Right cardiac atrium (tissue), 5 donors: ENCODE measurements at regions of chr2 and their contacts with region 1.

Region 1: DNA sequence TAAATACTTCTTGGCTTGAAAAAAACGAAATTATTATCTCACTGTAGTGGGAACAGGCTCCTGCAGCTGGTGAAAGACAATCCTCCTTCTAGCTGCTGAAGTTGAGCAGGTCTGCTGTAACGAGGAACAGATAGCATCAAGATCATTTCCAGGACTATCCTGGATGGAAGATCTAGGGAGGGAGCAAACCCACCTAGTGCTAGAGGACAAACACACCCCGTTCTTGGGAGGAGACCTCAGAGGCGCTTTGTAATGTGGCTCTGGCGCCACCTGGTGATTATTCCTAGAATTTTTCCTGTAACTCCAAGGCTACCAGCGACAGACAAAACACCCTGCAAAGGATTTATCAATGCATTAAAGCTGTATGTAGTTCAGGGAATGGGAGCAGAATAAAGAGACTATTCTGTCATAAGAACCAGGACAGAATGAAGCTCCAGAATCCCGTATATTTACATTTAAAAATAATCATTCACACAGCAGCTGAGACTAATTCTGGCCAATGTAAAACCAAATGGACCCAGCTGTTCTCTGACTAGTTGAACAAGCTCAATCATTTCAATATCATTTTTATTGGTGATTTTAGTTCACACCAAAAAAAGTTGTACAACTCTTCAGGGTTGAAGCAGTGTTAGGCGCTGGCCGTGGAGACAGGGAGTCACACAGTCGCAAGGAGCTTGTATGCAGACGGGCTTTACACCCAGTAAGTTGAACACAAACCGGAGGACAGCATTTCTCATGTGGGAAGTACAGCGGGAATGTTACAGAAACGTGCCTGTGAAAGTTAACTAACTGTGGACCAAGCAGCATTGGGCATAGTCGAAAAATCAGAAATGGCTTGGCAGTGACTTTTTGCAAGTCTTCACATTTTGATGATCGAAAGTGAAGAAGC is 290.3 kb downstream of the TRIB2 start:
- DNase-seq: peak; percentile 44 to 61 (median 61)
- ATAC-seq: peak; percentile 90 to 93
- H3K4me3 ChIP-seq: peak overlapping the region; percentile 25
- H3K27ac ChIP-seq: peak overlapping the region; percentile 58
- H3K4me1 ChIP-seq: peaks cover 2% of the 10 kb centered on the region
- H3K27me3 ChIP-seq: no peaks in the 10 kb centered on the region

Region 2: GRCh38 chr2:11829947-11830707 is 1176.9 kb before region 1 on chr2:
- intact Hi-C with region 1: loop called in 2 of 4 experiments (anchors 5 to 10 kb)
- DNase-seq: peak; percentile 62 to 83 (median 71)
- ATAC-seq: peak; percentile 88 to 92
- H3K4me3 ChIP-seq: peak overlapping the region; percentile 34
- H3K27ac ChIP-seq: peak overlapping the region; percentile 55
- H3K4me1 ChIP-seq: peaks cover 8% of the 10 kb centered on the region
- H3K27me3 ChIP-seq: no peaks in the 10 kb centered on the region

Region 3: GRCh38 chr2:11863513-11864328 is 1143.4 kb before region 1 on chr2:
- intact Hi-C with region 1: loop called in 2 of 4 experiments (anchors 10 kb)
- DNase-seq: peak; percentile 91 to 95 (median 92)
- ATAC-seq: peak; percentile 94 to 98
- H3K4me3 ChIP-seq: no peak overlapping the region
- H3K27ac ChIP-seq: no peak overlapping the region
- H3K4me1 ChIP-seq: peaks cover 3% of the 10 kb centered on the region
- H3K27me3 ChIP-seq: no peaks in the 10 kb centered on the region

Region 4: GRCh38 chr2:12728221-12728777 is 278.8 kb before region 1 on chr2:
- intact Hi-C with region 1: loop called in 1 of 4 experiments (anchors 10 kb)
- DNase-seq: no peak
- ATAC-seq: no peak
- H3K4me3 ChIP-seq: no peak overlapping the region
- H3K27ac ChIP-seq: no peak overlapping the region
- H3K4me1 ChIP-seq: peaks cover 42% of the 10 kb centered on the region
- H3K27me3 ChIP-seq: no peaks in the 10 kb centered on the region

Region 5: GRCh38 chr2:12931186-12931844 is 75.8 kb before region 1 on chr2:
- intact Hi-C with region 1: loop called in 1 of 4 experiments (anchors 10 kb)
- DNase-seq: no peak
- ATAC-seq: peak; percentile 86 to 89
- H3K4me3 ChIP-seq: no peak overlapping the region
- H3K27ac ChIP-seq: no peak overlapping the region
- H3K4me1 ChIP-seq: peaks cover 2% of the 10 kb centered on the region
- H3K27me3 ChIP-seq: no peaks in the 10 kb centered on the region